Mammary epithelial cell (primary cell): ENCODE measurements at regions of chr2 and their contacts with region 1.

Region 1: DNA sequence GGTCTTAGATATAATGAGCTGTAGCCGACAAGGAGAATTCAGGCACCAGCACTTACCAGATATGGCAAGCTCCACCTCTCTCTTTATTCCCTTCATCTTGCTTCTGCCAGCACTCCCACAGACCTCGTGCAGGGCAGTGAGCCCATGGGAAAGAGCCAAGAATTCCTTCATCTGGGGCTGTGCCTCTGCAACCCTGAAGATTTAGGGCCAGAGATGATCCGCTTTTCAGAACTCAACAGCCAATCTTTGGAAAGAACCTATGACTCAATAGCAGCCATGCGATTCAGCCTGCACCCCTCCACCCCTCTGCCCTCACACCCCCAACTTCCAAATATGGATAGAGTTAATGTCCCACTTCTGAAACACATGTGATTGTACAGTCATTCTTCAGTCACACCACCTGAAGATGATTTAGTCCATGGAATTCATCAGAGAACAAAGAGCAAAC is 533.7 kb upstream of the TNP1 start:
- DNase-seq: peak; percentile 91
- H3K4me3 ChIP-seq: peak overlapping the region; percentile 27 to 42 (median 36)
- H3K27ac ChIP-seq: peak overlapping the region; percentile 73
- H3K4me1 ChIP-seq: peaks cover 21% of the 10 kb centered on the region
- H3K27me3 ChIP-seq: no peaks in the 10 kb centered on the region
- CTCF ChIP-seq: no peak

Region 2: DNA sequence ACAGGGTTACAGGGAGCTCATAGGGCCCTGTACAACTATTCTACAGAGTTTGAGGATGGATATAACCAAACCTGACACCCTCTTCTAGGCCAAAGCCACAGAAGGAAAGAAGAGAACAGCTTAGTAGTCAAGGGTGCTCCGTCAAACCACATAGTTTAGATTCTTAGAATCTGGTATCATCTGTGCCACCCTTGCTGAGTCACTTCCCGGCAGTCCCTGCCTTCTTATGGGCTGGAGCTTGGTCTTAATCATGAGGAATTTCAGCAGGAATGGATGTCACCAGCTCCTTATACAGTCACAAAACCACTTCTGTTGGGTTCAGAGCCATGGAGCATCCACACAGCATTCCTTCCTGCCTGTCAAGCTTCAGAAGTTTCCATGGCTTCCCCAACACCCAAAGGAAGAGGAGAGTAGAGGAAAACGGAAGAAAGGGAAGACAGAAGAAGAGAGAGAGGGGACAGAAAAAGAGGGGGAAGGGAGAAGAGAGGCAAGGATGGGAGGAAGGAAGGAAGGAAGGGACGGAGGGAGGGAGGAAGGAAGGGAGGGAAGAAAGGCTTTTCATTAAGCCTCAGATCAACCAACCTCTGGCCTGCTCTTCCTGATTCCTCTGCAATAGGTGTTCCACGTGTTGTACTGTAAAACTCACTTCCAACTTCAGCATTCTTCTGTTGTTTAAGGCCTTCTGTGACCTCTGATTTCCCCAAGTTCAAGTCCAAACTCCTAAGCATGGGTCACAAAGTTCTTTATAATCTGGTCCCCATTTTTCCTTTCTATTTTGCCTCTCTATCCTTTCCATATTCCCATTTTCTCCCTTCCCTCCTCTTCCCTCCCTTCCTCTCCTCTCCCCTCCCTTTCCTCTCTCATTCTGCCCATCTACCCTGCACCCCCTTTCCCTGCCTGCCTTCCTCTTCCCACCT is 287.6 kb before region 1 on chr2:
- CTCF ChIA-PET with region 1: no interaction called
- dilution Hi-C with region 1: no loop called
- in situ Hi-C with region 1: no loop called
- intact Hi-C with region 1: loop called (anchors 5 kb)
- DNase-seq: peak; percentile 83
- H3K4me3 ChIP-seq: no peak overlapping the region
- H3K27ac ChIP-seq: peak overlapping the region; percentile 92
- H3K4me1 ChIP-seq: peaks cover 58% of the 10 kb centered on the region
- H3K27me3 ChIP-seq: no peaks in the 10 kb centered on the region
- CTCF ChIP-seq: no peak

Region 3: GRCh38 chr2:217370391-217370790 is 23.2 kb before region 1 on chr2:
- CTCF ChIA-PET with region 1: interaction called, 4 read pairs
- dilution Hi-C with region 1: no loop called
- in situ Hi-C with region 1: no loop called
- intact Hi-C with region 1: loop called (anchors 1 kb)
- DNase-seq: peak; percentile 96
- H3K4me3 ChIP-seq: no peak overlapping the region
- H3K27ac ChIP-seq: no peak overlapping the region
- H3K4me1 ChIP-seq: peaks cover 37% of the 10 kb centered on the region
- H3K27me3 ChIP-seq: no peaks in the 10 kb centered on the region
- CTCF ChIP-seq: peak; percentile 16 to 51

Region 4: GRCh38 chr2:217430916-217431576 is 37.4 kb after region 1 on chr2:
- CTCF ChIA-PET with region 1: no interaction called
- dilution Hi-C with region 1: loop called (anchors 5 kb)
- in situ Hi-C with region 1: no loop called
- intact Hi-C with region 1: loop called (anchors 2 kb)
- DNase-seq: no peak
- H3K4me3 ChIP-seq: no peak overlapping the region
- H3K27ac ChIP-seq: no peak overlapping the region
- H3K4me1 ChIP-seq: peaks cover 33% of the 10 kb centered on the region
- H3K27me3 ChIP-seq: no peaks in the 10 kb centered on the region
- CTCF ChIP-seq: no peak